Calu3 (cell line): ENCODE measurements at regions of chr9 and their contacts with region 1.

Region 1: GRCh38 chr9:115591584-115591984 is 473.6 kb upstream of the TNC start:
- DNase-seq: peak; percentile 66
- H3K4me3 Mint-ChIP-seq: no peak overlapping the region
- H3K27ac Mint-ChIP-seq: peak overlapping the region; percentile 45
- H3K4me1 Mint-ChIP-seq: peaks cover 22% of the 10 kb centered on the region
- H3K27me3 Mint-ChIP-seq: no peaks in the 10 kb centered on the region
- CTCF ChIP-seq: no peak

Region 2: GRCh38 chr9:115672477-115673316 is 81.1 kb after region 1 on chr9:
- CTCF ChIA-PET with region 1: interaction called, 3 read pairs
- intact Hi-C with region 1: loop called (anchors 5 kb)
- DNase-seq: peak; percentile 36
- H3K4me3 Mint-ChIP-seq: no peak overlapping the region
- H3K27ac Mint-ChIP-seq: peak overlapping the region; percentile 99
- H3K4me1 Mint-ChIP-seq: peaks cover 29% of the 10 kb centered on the region
- H3K27me3 Mint-ChIP-seq: no peaks in the 10 kb centered on the region
- CTCF ChIP-seq: no peak

Region 3: GRCh38 chr9:115883457-115884329 is 292.1 kb after region 1 on chr9:
- CTCF ChIA-PET with region 1: no interaction called
- intact Hi-C with region 1: loop called (anchors 1 kb)
- DNase-seq: peak; percentile 34
- H3K4me3 Mint-ChIP-seq: no peak overlapping the region
- H3K27ac Mint-ChIP-seq: no peak overlapping the region
- H3K4me1 Mint-ChIP-seq: no peaks in the 10 kb centered on the region
- H3K27me3 Mint-ChIP-seq: no peaks in the 10 kb centered on the region
- CTCF ChIP-seq: no peak

Region 4: DNA sequence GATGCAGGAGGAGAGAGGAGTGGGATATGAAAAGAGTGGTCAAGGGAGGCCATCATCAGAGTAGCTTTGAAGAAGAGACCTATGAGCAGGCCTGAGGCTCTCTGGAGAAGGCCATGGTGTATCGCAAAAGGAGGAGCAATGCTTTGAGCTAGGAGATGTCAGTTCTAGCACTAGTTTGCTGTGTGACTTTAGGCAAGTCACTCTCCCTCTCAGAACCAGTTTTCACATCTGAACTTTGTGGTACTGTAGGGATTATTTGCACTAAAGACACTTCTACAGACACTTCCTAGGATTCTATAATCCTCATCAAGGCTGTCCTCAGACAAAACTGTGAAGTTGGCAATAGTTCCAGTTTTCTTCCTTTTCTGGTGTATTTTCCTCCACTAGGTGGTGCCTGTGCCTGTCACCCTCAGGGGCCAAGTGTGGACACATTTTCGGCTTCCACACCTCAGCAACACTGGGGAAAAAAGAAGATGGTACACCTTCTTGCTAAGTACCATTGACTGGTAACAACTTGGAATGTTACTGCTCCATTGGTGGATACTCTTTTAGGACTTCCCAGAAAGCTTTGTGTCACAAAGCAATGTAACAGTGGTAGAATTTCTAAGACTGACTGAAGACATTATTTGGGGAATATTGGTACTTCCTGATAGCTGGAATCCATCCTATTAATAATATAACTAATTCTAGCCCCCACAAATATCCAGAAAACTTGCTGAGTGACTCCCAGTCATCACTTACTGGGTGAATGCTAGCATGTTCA is 571.9 kb after region 1 on chr9:
- CTCF ChIA-PET with region 1: no interaction called
- intact Hi-C with region 1: loop called (anchors 5 kb)
- DNase-seq: no peak
- H3K4me3 Mint-ChIP-seq: no peak overlapping the region
- H3K27ac Mint-ChIP-seq: no peak overlapping the region
- H3K4me1 Mint-ChIP-seq: no peaks in the 10 kb centered on the region
- H3K27me3 Mint-ChIP-seq: peaks cover 34% of the 10 kb centered on the region
- CTCF ChIP-seq: no peak

Region 5: DNA sequence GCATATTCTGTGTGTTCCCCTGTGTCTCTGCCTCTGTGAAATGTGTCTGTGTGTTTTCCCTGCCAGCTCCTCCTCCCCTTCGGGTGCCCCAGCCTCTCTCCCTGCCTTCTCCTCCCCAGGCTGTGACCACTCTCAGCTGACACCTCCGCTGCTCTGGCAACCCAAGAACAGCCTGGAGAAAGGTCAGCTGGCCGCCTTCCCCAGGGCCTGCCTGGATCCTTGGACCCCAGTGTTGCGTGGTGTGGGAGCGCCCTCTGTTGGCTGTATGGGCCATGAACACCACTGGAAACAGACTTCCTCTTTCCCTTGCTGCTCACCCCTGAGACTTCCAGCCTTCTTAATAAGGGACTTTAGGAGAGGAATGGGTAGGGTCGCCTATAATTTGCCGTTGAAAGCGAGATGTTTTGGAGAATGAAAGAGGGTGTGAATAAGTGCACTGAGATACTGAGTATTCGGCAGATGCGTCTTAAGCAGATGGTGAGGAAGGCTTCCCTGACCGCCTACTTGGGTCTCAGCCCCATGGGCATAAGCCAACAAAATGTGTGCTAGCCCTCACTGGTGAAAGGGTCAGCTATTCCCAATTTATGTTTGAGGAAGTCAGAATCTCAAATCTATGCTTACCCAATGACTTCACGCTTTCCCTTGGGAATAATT is 980.6 kb after region 1 on chr9:
- CTCF ChIA-PET with region 1: interaction called, 3 read pairs
- intact Hi-C with region 1: loop called (anchors 2 kb)
- DNase-seq: peak; percentile 73
- H3K4me3 Mint-ChIP-seq: no peak overlapping the region
- H3K27ac Mint-ChIP-seq: no peak overlapping the region
- H3K4me1 Mint-ChIP-seq: peaks cover 6% of the 10 kb centered on the region
- H3K27me3 Mint-ChIP-seq: no peaks in the 10 kb centered on the region
- CTCF ChIP-seq: peak; percentile 58

Region 6: DNA sequence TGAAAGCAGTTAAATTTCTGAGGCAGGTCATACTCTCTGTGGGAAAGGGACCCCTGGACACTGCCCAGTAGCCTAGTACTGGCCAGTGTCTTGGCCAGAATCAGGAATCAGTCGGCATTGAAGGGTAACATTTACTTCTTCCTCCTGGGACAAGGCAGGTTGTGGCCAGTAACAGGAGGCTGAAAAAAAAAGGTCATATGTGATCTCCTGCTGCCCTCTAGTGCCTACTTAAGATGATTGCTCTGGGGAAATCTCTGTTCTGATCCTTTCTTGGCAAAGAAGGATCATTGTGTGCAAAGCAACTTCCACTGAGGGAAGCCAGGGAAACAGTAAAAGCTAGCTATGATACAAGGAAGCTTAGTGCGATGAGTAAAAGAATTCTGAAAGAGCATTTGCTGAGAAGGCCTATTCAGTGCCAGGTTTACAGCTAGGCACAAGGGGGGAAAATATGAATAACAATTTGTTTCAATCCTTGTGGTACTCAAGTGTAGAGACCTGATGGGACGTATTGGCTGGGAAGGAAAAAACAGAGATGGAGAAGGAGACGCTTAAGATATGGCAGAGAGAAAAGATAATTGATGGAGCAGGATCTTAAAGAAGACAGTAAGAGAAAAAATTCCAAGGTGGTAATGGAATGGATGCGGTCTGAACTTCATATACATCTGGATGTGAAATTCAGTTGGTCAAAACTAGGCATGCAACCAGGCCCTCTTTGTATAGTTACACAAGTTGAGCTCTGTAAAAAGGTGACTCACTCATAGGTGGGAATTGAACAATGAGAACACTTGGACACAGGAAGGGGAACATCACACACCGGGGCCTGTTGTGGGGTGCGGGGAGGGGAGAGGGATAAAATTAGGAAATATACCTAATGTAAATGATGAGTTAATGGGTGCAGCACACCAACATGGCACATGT is 1069.7 kb after region 1 on chr9:
- CTCF ChIA-PET with region 1: no interaction called
- intact Hi-C with region 1: loop called (anchors 2 kb)
- DNase-seq: peak; percentile 18
- H3K4me3 Mint-ChIP-seq: no peak overlapping the region
- H3K27ac Mint-ChIP-seq: no peak overlapping the region
- H3K4me1 Mint-ChIP-seq: no peaks in the 10 kb centered on the region
- H3K27me3 Mint-ChIP-seq: no peaks in the 10 kb centered on the region
- CTCF ChIP-seq: no peak